ENCODE measurements at regions of chr17 and their contacts with region 1.

Region 1: DNA sequence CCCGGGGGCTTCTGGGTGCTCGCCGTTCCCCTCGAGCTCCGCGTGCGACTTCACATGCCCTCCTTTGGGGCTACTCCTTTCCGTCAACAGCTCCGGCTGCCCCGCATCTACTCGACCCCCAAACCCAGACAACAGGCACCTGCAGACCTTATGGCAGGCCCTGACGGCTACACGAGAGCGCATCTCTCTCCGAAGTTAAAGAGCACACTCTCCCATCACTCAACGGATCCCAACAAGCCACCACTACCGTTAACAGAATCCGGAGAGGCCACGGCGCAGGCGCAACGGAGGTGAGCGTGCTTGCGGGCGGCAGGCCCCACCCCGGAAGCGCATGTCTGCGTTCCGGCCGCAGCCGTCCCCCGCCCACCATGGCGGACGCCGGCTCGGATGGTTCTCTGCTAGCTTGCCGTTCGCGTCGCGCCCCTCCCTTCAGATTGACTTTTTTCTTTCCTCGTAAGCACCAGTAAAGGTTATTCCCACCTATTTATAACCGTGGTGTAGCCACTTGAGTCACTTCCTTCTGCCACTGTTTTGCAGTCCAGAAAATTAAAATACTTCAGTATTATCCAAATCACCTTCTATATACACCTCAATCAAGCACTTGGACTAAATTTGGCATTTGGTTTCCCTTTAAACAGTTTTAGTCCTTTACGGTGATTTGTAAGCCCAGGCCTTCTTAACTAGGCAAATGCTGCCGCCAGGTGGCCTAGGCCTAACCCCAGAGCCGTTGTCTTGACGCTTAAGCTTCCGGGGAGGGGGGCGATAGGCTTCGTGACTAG is at the start of gene POLG2:
- DNase-seq: peak; percentile 95 to 96 (median 95)
- H3K4me3 ChIP-seq: peak within 1 kb of the TSS; percentile 90 to 93
- H3K4me3 Mint-ChIP-seq: peak within 1 kb of the TSS; percentile 100
- H3K27ac ChIP-seq: peak within 1 kb of the TSS; percentile 79
- H3K27ac Mint-ChIP-seq: peak within 1 kb of the TSS; percentile 98 to 100 (median 99)
- H3K4me1 ChIP-seq: peaks cover 80% of the 10 kb centered on the region
- H3K4me1 Mint-ChIP-seq: peaks cover 50 to 91% (median 67%) of the 10 kb centered on the region in 4 donors
- H3K27me3 ChIP-seq: no peaks in the 10 kb centered on the region
- H3K27me3 Mint-ChIP-seq: no peaks in the 10 kb centered on the region
- total RNA-seq, gene POLG2: 57.4 to 60.0 TPM

Region 2: DNA sequence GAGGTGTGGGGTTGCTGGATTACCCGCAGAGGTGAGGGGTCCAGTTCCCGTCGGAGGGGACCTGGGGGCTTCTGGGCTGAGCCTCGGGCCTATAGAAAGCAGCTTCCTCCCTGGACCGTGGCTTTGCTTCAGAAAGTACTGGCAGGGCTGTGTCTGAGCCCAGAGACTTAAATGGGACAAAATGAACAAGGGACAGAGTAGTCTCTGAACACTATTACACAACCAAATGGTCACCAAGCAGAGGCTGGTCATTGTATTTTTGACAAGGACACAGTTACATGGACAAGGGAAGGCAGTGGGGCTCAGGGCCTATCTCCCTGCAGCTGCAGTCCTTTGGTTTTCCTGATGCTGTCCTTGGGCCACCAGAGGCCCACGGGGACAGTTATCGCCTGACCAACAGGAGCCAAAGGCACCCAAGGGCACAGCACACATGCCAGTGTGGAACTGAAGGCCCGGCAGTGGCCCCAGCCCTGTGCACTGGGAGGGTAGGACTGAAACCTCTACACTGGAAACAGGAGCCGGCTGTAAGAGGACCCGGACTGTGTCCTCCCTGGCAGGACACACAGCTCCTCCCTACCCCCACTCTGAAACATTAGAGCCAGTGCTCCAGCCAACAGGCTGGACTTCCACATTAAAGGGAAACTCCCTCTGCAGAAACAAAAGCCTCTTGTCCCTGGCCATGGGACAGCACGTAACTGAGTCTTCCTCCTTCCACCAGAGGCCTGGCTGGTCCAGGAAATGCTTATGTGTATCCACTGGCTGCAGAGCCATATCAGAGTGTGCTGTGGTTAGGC is 341.0 kb before region 1 on chr17:
- CTCF ChIA-PET with region 1: no interaction called
- POLR2A ChIA-PET with region 1: no interaction called
- intact Hi-C with region 1: no loop called
- DNase-seq: no peak
- H3K4me3 ChIP-seq: no peak overlapping the region
- H3K4me3 Mint-ChIP-seq: no peak overlapping the region
- H3K27ac ChIP-seq: no peak overlapping the region
- H3K27ac Mint-ChIP-seq: no peak overlapping the region
- H3K4me1 ChIP-seq: no peaks in the 10 kb centered on the region
- H3K4me1 Mint-ChIP-seq: no peaks in the 10 kb centered on the region
- H3K27me3 ChIP-seq: no peaks in the 10 kb centered on the region
- H3K27me3 Mint-ChIP-seq: no peaks in the 10 kb centered on the region

Region 3: GRCh38 chr17:64262417-64263260 is 234.3 kb before region 1 on chr17 and contains the start of gene TEX2:
- CTCF ChIA-PET with region 1: no interaction called
- POLR2A ChIA-PET with region 1: interaction called, 3 read pairs
- intact Hi-C with region 1: loop called (anchors 1 kb)
- DNase-seq: peak; percentile 70 to 86 (median 73)
- H3K4me3 ChIP-seq: peak within 1 kb of the TSS; percentile 76 to 79
- H3K4me3 Mint-ChIP-seq: peak within 1 kb of the TSS; percentile 91 to 98 (median 95)
- H3K27ac ChIP-seq: peak within 1 kb of the TSS; percentile 74
- H3K27ac Mint-ChIP-seq: peak within 1 kb of the TSS; percentile 93 to 98 (median 96)
- H3K4me1 ChIP-seq: peaks cover 33% of the 10 kb centered on the region
- H3K4me1 Mint-ChIP-seq: peaks cover 21 to 46% (median 34%) of the 10 kb centered on the region in 4 donors
- H3K27me3 ChIP-seq: no peaks in the 10 kb centered on the region
- H3K27me3 Mint-ChIP-seq: peaks cover 0 to 9% of the 10 kb centered on the region in 2 donors
- total RNA-seq, gene TEX2: 12.6 to 13.1 TPM

Region 4: DNA sequence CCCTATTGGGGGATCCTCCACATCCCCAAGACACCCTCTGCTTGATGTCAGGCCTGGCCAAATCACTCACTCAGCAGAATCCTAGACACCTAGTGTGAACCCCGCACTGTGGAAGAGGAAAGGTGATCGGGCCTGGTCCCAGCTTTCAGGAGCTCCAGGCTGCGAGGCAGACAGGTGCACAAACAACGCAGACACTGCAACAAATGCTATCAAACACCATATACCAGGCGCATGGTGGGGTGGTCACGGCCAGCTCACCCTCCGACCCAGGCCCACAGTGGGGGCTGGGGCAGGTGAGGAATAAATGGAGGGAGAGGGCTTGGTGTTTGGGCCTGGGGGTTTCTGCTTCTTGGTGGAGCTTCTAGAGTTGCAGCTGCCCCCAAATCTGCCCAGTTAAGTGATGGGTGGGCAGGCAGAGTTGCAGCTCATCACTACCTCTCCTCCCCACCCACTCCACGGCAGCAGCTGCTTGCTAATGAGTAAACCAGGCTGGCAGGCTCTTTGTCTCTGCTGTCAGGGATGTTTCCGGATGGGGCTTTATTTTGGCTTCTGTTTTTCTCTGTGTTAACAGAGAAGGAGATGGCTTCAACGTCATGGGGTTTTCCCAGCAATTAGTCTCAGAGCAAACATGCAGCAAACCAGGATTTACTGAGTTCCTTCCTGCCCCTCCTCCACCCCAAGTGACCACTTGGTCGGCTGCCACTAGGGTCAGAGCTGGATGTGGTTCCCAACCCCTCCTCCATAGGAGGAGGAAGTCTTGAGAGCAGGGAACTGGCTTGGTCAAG is 152.9 kb before region 1 on chr17:
- CTCF ChIA-PET with region 1: no interaction called
- POLR2A ChIA-PET with region 1: interaction called, 5 read pairs
- intact Hi-C with region 1: loop called (anchors 10 kb)
- DNase-seq: peak; percentile 17 to 66 (median 21)
- H3K4me3 ChIP-seq: no peak overlapping the region
- H3K4me3 Mint-ChIP-seq: peak overlapping the region in 3 of 8 donors; percentile 15 to 55 (median 33)
- H3K27ac ChIP-seq: no peak overlapping the region
- H3K27ac Mint-ChIP-seq: peak overlapping the region; percentile 35 to 69 (median 64)
- H3K4me1 ChIP-seq: peaks cover 39% of the 10 kb centered on the region
- H3K4me1 Mint-ChIP-seq: peaks cover 15 to 32% (median 24%) of the 10 kb centered on the region in 4 donors
- H3K27me3 ChIP-seq: no peaks in the 10 kb centered on the region
- H3K27me3 Mint-ChIP-seq: no peaks in the 10 kb centered on the region

Region 5: GRCh38 chr17:64455993-64456885 is 40.7 kb before region 1 on chr17:
- CTCF ChIA-PET with region 1: interaction called, 5 read pairs
- POLR2A ChIA-PET with region 1: interaction called, 17 read pairs
- intact Hi-C with region 1: no loop called
- DNase-seq: peak in 3 of 5 donors; percentile 10 to 21 (median 19)
- H3K4me3 ChIP-seq: no peak overlapping the region
- H3K4me3 Mint-ChIP-seq: peak overlapping the region in 7 of 8 donors; percentile 32 to 67 (median 62)
- H3K27ac ChIP-seq: no peak overlapping the region
- H3K27ac Mint-ChIP-seq: peak overlapping the region in 6 of 7 donors; percentile 61 to 92 (median 85)
- H3K4me1 ChIP-seq: peaks cover 17% of the 10 kb centered on the region
- H3K4me1 Mint-ChIP-seq: peaks cover 8 to 23% (median 17%) of the 10 kb centered on the region in 4 donors
- H3K27me3 ChIP-seq: no peaks in the 10 kb centered on the region
- H3K27me3 Mint-ChIP-seq: no peaks in the 10 kb centered on the region

Region 6: DNA sequence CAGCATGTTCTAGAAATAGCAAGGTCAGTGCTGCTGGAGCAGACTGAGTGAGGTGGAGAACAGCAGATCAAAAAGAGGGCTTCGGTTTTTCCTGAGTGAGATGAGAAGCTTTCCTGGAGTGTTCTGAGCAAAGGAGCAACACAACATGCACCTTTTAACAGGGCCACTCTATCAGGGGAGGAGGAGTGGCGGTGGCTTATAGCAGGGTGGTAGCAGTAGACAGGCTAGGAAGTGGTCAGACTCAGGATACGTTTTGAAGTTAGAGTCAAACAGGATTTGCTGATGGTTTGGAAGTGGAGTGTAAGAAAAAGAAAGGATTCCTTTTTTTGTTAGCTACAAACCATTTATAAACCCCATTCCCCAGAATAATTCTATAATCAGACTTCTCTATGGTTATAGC is 12.6 kb before region 1 on chr17:
- CTCF ChIA-PET with region 1: interaction called, 3 read pairs
- POLR2A ChIA-PET with region 1: interaction called, 110 read pairs
- intact Hi-C with region 1: no loop called
- DNase-seq: no peak
- H3K4me3 ChIP-seq: no peak overlapping the region
- H3K4me3 Mint-ChIP-seq: no peak overlapping the region
- H3K27ac ChIP-seq: no peak overlapping the region
- H3K27ac Mint-ChIP-seq: peak overlapping the region in 5 of 7 donors; percentile 52 to 88 (median 74)
- H3K4me1 ChIP-seq: peaks cover 12% of the 10 kb centered on the region
- H3K4me1 Mint-ChIP-seq: peaks cover 11 to 14% (median 13%) of the 10 kb centered on the region in 4 donors
- H3K27me3 ChIP-seq: no peaks in the 10 kb centered on the region
- H3K27me3 Mint-ChIP-seq: no peaks in the 10 kb centered on the region

Region 7: GRCh38 chr17:64565563-64565962 is 68.6 kb after region 1 on chr17:
- CTCF ChIA-PET with region 1: no interaction called
- POLR2A ChIA-PET with region 1: no interaction called
- intact Hi-C with region 1: no loop called
- DNase-seq: no peak
- H3K4me3 ChIP-seq: no peak overlapping the region
- H3K4me3 Mint-ChIP-seq: no peak overlapping the region
- H3K27ac ChIP-seq: no peak overlapping the region
- H3K27ac Mint-ChIP-seq: no peak overlapping the region
- H3K4me1 ChIP-seq: no peaks in the 10 kb centered on the region
- H3K4me1 Mint-ChIP-seq: peaks cover 0 to 3% (median 0%) of the 10 kb centered on the region in 4 donors
- H3K27me3 ChIP-seq: no peaks in the 10 kb centered on the region
- H3K27me3 Mint-ChIP-seq: no peaks in the 10 kb centered on the region

Region 8: GRCh38 chr17:64661976-64662773 is 165.2 kb after region 1 on chr17 and contains the start of gene SMURF2:
- CTCF ChIA-PET with region 1: no interaction called
- POLR2A ChIA-PET with region 1: interaction called, 13 read pairs
- intact Hi-C with region 1: no loop called
- DNase-seq: peak; percentile 81 to 85 (median 83)
- H3K4me3 ChIP-seq: peak within 1 kb of the TSS; percentile 61 to 82
- H3K4me3 Mint-ChIP-seq: peak within 1 kb of the TSS; percentile 97 to 99 (median 99)
- H3K27ac ChIP-seq: peak within 1 kb of the TSS; percentile 54
- H3K27ac Mint-ChIP-seq: peak within 1 kb of the TSS; percentile 95 to 98 (median 97)
- H3K4me1 ChIP-seq: peaks cover 39% of the 10 kb centered on the region
- H3K4me1 Mint-ChIP-seq: peaks cover 21 to 40% (median 31%) of the 10 kb centered on the region in 4 donors
- H3K27me3 ChIP-seq: no peaks in the 10 kb centered on the region
- H3K27me3 Mint-ChIP-seq: no peaks in the 10 kb centered on the region
- total RNA-seq, gene SMURF2: 32.8 to 35.0 TPM

Measured in CD4-positive, alpha-beta memory T cell (primary cell).